Panc1 (cell line): ENCODE measurements at regions of chr6 and their contacts with region 1.

Region 1: DNA sequence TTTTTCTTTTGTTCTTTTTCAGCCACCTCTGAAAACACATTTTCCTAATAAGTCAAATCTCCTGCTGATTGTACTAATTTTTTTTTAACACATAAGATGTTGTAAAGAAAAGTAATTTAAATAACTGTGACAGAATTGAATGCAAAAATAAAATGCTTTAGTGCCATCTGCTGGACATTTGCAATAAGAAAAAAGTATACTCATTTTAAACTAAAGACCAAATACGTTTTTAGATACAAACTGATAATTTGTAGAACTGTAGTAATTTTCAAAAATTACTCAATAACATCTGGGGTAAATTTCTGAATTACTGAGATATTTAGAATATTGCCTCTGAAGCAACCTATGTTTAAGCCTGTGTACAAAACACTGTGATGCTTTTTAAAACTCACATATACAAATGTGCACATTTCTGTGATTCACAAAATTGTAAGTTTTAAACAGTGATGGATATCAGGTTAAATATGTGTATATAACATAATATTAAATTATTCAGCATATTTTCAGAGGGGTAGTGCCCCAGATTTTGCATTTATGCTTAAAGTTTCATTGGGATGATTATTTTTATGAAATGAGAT is 198.7 kb downstream of the RIMS1 start:
- DNase-seq: no peak
- ATAC-seq: no peak
- H3K4me3 ChIP-seq: no peak overlapping the region
- H3K27ac ChIP-seq: no peak overlapping the region
- H3K4me1 ChIP-seq: no peaks in the 10 kb centered on the region
- H3K27me3 ChIP-seq: peaks cover 14% of the 10 kb centered on the region; the same call in 1 of the 2 replicates
- CTCF ChIP-seq: peak; percentile 49; the same call in 1 of the 2 replicates

Region 2: DNA sequence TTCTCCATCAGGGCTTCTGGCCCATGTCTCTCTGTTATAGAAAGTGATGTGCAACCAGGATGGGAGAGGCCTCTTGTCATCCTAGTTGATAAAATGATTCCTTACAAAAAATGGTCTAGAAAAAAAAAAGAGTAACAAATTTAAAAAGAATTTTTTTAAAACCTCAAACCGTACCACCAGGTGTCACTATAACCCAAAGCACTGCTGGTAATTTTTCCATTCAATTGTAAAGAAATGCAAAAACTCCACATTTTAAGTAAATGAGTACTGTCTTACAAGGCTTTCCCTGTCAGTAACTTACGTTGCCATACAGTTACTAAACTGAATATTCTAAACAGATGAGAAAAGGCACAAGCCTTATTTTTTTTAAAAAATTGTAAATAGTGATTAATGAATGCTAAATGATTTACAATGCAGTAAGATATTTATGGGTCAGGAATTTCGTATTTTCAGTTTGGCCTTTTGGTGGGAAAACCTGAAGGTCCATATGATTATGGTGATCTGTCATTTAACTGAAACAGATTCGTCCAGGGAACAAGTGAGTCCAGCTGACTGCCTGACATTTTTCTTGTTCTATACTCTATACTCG is 701.1 kb before region 1 on chr6:
- CTCF ChIA-PET with region 1: no interaction called
- POLR2A ChIA-PET with region 1: no interaction called
- in situ Hi-C with region 1: no loop called
- intact Hi-C with region 1: loop called (anchors 10 kb)
- DNase-seq: no peak
- ATAC-seq: no peak
- H3K4me3 ChIP-seq: no peak overlapping the region
- H3K27ac ChIP-seq: peak overlapping the region; percentile 48
- H3K4me1 ChIP-seq: peaks cover 54% of the 10 kb centered on the region
- H3K27me3 ChIP-seq: no peaks in the 10 kb centered on the region
- CTCF ChIP-seq: peak; percentile 76; the same call in 1 of the 2 replicates

Region 3: DNA sequence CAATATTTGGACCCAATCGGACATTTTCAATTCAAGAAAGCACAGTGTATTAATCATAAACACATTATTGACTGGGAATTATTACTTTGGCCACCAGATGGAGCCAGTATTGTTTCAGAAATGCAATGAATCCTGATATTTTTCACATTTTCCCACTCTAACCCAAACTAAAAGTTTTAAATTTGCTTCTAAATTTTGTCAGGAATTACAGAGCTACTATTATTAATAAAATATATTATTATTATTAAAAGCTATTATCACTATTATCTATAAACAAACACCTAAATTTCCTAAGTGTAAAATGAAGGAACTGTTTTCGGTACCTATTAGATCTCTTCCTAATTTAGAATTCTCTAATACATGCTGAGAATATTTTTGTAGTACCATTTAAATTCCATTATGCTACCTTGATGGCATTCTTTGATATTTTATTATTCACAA is 551.1 kb before region 1 on chr6:
- CTCF ChIA-PET with region 1: no interaction called
- POLR2A ChIA-PET with region 1: no interaction called
- in situ Hi-C with region 1: no loop called
- intact Hi-C with region 1: loop called (anchors 2 kb)
- DNase-seq: no peak
- ATAC-seq: no peak
- H3K4me3 ChIP-seq: no peak overlapping the region
- H3K27ac ChIP-seq: no peak overlapping the region
- H3K4me1 ChIP-seq: no peaks in the 10 kb centered on the region
- H3K27me3 ChIP-seq: peaks cover 4% of the 10 kb centered on the region; the same call in 1 of the 2 replicates
- CTCF ChIP-seq: peak; percentile 69; the same call in 1 of the 2 replicates

Region 4: DNA sequence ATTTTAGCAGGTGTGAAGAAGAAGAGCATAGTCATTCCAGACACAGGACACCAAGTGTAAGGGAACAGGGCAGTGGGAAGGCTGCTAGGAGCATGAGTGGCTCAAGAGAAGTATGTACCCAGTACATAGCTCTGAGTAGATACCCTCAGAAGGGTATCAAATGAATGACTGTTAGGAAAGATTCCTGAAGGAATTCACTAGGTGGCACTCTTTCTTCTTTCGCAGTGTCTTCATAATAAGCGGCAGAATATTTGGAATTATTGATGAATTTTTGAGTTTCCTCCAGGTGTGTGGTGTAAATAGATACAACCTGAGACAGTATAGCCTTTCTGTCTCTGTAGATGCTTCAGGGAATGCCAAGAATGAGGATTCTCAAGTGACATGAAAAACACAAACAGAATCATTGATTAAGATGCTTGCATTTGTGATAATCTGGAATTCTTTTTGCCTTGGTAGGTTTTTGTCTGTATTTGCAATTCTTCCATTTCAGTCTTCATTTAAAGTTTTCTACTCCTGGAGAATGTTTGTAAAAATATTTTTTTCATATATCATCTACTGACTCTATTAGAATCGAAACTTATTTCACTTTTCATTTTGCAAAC is 463.1 kb before region 1 on chr6:
- CTCF ChIA-PET with region 1: no interaction called
- POLR2A ChIA-PET with region 1: no interaction called
- in situ Hi-C with region 1: no loop called
- intact Hi-C with region 1: loop called (anchors 1 kb)
- DNase-seq: no peak
- ATAC-seq: peak; percentile 63; the same call in 1 of the 2 replicates
- H3K4me3 ChIP-seq: no peak overlapping the region
- H3K27ac ChIP-seq: no peak overlapping the region
- H3K4me1 ChIP-seq: no peaks in the 10 kb centered on the region
- H3K27me3 ChIP-seq: no peaks in the 10 kb centered on the region; the same call in 1 of the 2 replicates
- CTCF ChIP-seq: peak; percentile 78

Region 5: GRCh38 chr6:72042088-72042487 is 43.0 kb before region 1 on chr6:
- CTCF ChIA-PET with region 1: no interaction called
- POLR2A ChIA-PET with region 1: no interaction called
- in situ Hi-C with region 1: no loop called
- intact Hi-C with region 1: no loop called
- DNase-seq: peak; percentile 7
- ATAC-seq: no peak
- H3K4me3 ChIP-seq: no peak overlapping the region
- H3K27ac ChIP-seq: no peak overlapping the region
- H3K4me1 ChIP-seq: no peaks in the 10 kb centered on the region
- H3K27me3 ChIP-seq: peaks cover 2% of the 10 kb centered on the region
- CTCF ChIP-seq: peak; percentile 56; the same call in 1 of the 2 replicates